Common myeloid progenitor, CD34-positive (primary cell): ENCODE measurements at regions of chr12 and their contacts with region 1.

Region 1: DNA sequence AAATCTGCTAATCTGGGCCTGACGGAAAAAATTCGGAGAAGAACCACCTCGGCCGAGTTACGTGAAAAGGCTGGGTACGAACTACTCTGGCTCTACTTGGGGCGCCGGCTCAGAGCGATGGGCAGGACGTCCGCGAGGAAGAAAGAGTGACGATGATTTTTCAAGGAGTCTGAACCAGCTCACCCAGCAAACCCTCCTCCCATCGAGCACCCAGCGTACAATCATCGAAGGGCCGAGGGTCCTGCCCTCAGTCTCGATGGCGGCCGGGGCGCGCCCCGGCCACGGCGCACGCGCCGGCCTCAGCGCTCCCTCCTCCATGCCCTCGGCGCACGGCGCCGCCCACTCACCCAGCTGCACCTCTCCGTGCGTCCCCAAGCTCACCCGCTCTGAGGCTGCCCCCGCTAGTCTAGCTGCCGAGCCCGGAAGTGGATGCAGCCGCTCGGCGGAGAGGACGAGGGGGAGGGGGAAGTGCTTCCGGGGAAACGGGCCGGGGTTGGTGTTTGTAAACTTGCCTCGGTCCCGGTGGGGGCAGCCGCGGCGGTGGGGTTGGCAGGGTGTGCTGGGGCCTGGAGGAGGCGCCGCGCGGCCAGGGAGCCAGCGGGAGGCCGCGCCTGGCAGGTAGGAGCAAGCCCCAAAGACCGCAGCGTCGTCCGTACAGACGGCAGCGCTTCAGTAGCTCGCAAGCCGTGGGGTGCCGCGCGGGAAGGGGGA is at the starts of genes CSAD and ZNF740:
- DNase-seq: peak; percentile 97 to 98 (median 98)
- H3K4me3 ChIP-seq: peak within 1 kb of the TSS; percentile 51 to 87 (median 76)
- H3K27ac ChIP-seq: peak within 1 kb of the TSS; percentile 74 to 90
- H3K4me1 ChIP-seq: peaks cover 23 to 38% (median 32%) of the 10 kb centered on the region in 4 experiments
- H3K27me3 ChIP-seq: no peaks in the 10 kb centered on the region

Region 2: GRCh38 chr12:53200458-53201176 is 20.2 kb after region 1 on chr12:
- CTCF ChIA-PET with region 1: interaction called, 69 read pairs
- POLR2A ChIA-PET with region 1: interaction called, 6 read pairs
- DNase-seq: peak in 2 of 3 donors; percentile 40 to 57
- H3K4me3 ChIP-seq: no peak overlapping the region
- H3K27ac ChIP-seq: peak overlapping the region in 1 of 2 experiments; percentile 49
- H3K4me1 ChIP-seq: peaks cover 9 to 47% (median 39%) of the 10 kb centered on the region in 4 experiments
- H3K27me3 ChIP-seq: no peaks in the 10 kb centered on the region

Region 3: GRCh38 chr12:53213348-53213747 is 33.0 kb after region 1 on chr12:
- CTCF ChIA-PET with region 1: interaction called, 18 read pairs
- POLR2A ChIA-PET with region 1: no interaction called
- DNase-seq: peak; percentile 78 to 86 (median 82)
- H3K4me3 ChIP-seq: no peak overlapping the region
- H3K27ac ChIP-seq: no peak overlapping the region
- H3K4me1 ChIP-seq: peaks cover 2 to 65% (median 55%) of the 10 kb centered on the region in 4 experiments
- H3K27me3 ChIP-seq: no peaks in the 10 kb centered on the region